ENCODE measurements at regions of chr3 and their contacts with region 1.

Region 1: DNA sequence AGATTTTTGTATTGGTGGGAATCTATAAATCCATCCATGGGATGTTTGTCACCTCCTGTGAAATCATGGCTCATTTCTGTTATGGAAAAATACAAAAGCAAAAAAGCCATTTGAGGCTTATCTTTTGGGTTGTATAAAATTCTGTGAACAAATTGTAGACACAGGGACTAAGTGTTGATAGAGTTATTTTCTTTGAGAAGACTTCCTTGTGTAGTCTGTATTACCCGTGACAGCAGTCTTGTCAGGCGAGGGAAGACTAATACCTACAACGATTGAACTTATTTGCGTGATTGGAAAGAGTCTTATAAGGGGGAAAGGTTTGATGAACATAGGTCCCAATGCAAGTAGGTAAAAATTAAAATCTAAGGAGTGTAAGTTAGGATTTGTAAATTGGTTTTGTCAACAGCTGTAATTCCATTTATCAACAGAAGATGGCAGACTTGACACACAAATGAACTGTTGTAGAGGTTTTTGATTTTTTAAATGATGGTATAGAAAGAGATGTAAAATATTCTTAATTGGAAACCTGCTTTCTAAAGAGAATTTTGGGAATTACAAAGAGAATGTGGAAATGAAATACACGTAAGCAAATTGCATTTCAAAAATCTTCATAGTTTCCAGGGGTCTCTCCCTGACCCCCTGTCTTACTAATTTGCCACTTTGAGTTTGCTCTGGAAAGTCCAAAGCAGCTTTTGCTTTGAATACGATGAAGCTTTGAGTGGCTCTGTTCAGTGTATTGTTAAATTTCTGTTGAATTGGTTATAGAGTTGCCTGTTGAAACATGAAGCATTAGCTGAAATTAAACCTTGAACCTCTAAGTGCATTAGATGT is 33.2 kb downstream of the SLC25A26 start:
- DNase-seq: peak; percentile 37
- CTCF ChIP-seq: peak; percentile 51

Region 2: DNA sequence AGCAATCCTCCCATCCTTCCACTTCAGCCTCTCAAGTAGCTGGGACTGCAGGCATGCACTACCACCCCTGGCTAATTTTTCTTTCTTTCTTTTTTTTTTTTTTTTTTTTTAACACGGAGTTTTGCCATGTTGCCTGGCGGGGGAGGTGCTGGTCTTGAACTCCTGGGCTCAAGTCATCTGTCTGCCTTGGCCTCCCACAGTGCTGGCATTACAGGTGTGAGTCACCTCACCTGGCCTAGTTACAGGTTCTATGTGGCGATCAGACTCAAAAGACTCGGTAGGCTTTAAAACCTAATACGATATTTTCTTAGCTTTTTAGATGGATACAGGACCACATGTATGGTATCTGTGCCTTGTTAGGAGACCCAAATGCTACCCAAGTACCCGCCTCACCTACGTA is 47.2 kb before region 1 on chr3:
- CTCF ChIA-PET with region 1: no interaction called
- POLR2A ChIA-PET with region 1: no interaction called
- DNase-seq: no peak
- CTCF ChIP-seq: no peak

Region 3: GRCh38 chr3:66236281-66236680 is 17.7 kb before region 1 on chr3:
- CTCF ChIA-PET with region 1: interaction called, 14 read pairs
- POLR2A ChIA-PET with region 1: no interaction called
- DNase-seq: no peak
- CTCF ChIP-seq: no peak

Region 4: DNA sequence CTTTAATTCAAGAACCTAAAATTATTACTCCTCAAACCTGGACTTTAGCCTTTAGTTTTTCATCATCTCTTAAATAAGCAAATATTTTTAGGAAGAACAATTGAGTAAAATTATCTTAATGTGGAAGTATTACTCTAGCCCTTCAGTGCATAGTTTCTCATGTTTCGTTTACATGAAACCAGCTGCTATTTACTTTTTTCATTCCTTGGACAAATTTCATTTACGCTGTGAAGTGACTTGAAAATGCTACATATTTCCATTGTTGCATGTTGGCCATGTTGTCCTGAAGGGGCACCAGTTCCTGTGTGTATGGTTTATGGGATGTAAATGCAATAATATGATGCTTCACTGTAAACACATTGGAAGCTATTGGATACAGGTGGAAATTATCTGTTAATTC is 16.7 kb after region 1 on chr3:
- CTCF ChIA-PET with region 1: interaction called, 21 read pairs
- POLR2A ChIA-PET with region 1: no interaction called
- DNase-seq: no peak
- CTCF ChIP-seq: no peak

Region 5: DNA sequence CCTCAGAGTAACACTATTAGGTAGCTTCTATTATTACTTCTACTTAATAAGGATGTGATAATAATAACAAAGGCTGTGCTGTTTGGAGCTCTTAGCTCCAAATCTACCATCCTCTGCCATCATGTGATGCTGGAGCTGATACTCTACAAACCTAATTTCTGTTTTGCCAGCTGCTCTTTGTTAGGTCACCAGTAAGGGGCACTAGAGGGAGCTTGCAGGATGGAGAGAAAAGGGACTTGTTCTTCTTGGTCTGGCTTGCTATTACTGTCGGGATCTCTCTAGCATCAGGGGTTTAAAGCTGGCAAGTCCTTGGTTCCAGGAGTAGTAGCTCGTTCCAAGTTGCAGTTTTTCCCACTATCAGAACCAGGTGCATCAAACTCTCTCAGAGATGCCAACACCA is 549.2 kb after region 1 on chr3:
- CTCF ChIA-PET with region 1: interaction called, 13 read pairs
- POLR2A ChIA-PET with region 1: no interaction called
- DNase-seq: no peak
- CTCF ChIP-seq: no peak

Region 6: DNA sequence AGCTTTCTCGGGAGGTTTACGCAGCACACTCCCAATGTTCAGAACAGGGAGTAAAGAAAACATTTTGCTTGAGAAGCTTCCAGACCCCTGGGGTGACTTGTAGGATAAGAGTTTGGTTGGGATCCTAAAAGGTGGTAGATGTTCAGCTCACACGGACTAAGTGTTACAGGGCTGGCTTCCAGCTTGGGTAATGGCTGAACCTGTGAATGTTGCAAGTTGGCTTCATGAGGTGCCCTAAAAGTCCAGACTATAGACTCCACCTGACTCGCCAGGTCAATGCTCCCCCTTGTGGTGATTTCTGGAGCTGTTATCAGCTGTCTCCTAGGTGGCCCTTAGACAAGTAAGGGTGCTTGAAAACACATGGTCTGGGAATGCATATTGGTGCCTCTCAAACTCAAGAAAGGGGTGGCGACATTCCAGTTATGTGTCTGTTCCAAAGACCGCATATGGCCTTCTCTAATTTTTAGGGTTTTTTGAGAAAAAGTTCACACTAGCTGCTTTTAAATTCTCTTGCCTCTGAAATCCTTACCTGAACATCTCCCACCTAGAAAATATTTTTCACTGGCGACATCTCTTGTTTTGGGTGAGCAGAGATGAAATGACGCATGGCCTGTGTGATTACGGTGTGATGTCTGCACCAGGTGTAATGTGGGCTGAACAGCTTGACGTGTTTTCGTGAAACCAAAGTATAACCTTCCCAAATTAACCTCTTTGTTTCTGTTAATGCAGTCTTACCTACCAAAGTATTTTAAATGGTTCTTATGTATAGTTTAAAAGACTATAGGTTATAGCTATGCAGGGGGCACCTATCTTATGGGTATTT is 568.4 kb after region 1 on chr3:
- CTCF ChIA-PET with region 1: interaction called, 130 read pairs
- POLR2A ChIA-PET with region 1: no interaction called
- DNase-seq: peak; percentile 56
- CTCF ChIP-seq: peak; percentile 75